BJ (cell line): ENCODE measurements at regions of chr15 and their contacts with region 1.

Region 1: GRCh38 chr15:79339564-79340314 is 28.8 kb downstream of the TMED3 start:
- DNase-seq: peak; percentile 16
- H3K4me3 ChIP-seq: no peak overlapping the region
- H3K27me3 ChIP-seq: no peaks in the 10 kb centered on the region
- CTCF ChIP-seq: peak; percentile 91

Region 2: GRCh38 chr15:79329171-79329611 is 10.5 kb before region 1 on chr15:
- CTCF ChIA-PET with region 1: interaction called, 24 read pairs
- POLR2A ChIA-PET with region 1: no interaction called
- DNase-seq: no peak
- H3K4me3 ChIP-seq: no peak overlapping the region
- H3K27me3 ChIP-seq: no peaks in the 10 kb centered on the region
- CTCF ChIP-seq: no peak

Region 3: GRCh38 chr15:79364571-79365240 is 25.0 kb after region 1 on chr15:
- CTCF ChIA-PET with region 1: interaction called, 15 read pairs
- POLR2A ChIA-PET with region 1: no interaction called
- DNase-seq: no peak
- H3K4me3 ChIP-seq: no peak overlapping the region
- H3K27me3 ChIP-seq: no peaks in the 10 kb centered on the region
- CTCF ChIP-seq: peak; percentile 52